HEK293 (cell line): ENCODE measurements at regions of chr11 and their contacts with region 1.

Region 1: DNA sequence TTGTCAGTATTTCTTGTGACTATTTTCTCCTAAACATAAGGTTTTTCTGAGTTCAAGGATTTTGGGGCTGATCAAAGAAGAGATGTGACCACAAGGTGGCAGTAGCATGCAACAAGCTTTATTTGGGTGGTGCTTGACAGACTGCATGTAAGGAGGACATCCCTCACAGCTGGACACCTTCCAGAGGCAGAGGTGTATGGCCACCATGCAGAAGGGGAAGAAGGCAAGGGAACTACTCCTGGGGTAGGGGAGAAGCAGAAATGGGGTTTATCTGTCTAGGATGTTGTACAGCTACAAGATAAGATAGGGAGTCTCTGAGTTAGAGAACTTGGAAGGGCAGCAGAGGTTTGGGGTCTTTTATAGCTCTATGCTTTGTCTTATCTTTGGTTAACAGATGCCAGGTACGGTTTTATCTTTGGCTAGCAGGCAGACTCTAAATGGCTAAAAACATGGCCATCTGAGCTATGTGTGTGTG is 5.1 kb upstream of the BIRC2 start:
- H3K4me3 ChIP-seq: no peak overlapping the region
- H3K27ac ChIP-seq: no peak overlapping the region
- H3K4me1 ChIP-seq: no peaks in the 10 kb centered on the region
- CTCF ChIP-seq: 0 out of 2 replicates have a peak, but pooled peaks have one; percentile 27

Region 2: GRCh38 chr11:102047305-102047924 is 294.5 kb before region 1 on chr11 and contains the start of gene CFAP300:
- CTCF ChIA-PET with region 1: no interaction called
- POLR2A ChIA-PET with region 1: no interaction called
- H3K4me3 ChIP-seq: peak within 1 kb of the TSS; percentile 51
- H3K27ac ChIP-seq: peak within 1 kb of the TSS; percentile 24; the same call in 1 of the 2 replicates
- H3K4me1 ChIP-seq: no peaks in the 10 kb centered on the region
- CTCF ChIP-seq: no peak

Region 3: DNA sequence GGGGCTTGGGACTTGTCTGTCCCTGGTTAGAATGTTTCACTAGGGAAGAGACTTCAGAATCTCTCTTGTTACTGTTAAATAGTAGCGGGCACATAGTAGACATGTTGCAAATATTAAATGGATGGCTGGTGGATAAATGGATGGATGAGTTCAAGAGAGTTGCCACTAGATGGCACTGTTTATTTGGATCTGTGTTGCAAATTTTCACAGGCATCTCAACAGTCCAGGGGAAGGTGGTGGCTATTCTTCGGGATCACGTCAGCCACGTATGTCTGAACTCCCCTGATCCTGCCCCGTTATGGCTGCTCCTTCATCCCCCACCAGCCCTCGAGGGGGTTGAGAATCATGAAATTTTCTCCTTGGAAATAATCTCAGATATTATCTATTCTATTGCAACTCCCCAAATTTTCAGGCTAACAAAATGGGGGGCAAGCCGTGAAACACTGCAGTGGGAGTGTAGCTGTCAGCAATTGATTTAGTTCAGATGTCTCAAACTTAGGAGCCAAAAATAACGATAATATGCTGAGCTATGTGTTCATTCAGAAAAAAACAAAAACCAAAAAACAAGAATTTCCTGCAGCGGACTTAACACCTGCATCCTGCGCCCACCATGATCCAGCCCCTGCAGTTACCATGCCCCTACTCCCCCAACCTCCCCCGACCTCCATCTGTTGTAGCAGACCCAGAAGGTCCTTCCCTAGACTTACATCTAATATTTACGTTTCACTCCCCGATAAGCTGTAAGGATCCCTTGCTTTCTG is 53.7 kb before region 1 on chr11:
- CTCF ChIA-PET with region 1: interaction called, 24 read pairs
- POLR2A ChIA-PET with region 1: no interaction called
- H3K4me3 ChIP-seq: no peak overlapping the region
- H3K27ac ChIP-seq: no peak overlapping the region
- H3K4me1 ChIP-seq: no peaks in the 10 kb centered on the region
- CTCF ChIP-seq: peak; percentile 42; the same call in 1 of the 2 replicates

Region 4: DNA sequence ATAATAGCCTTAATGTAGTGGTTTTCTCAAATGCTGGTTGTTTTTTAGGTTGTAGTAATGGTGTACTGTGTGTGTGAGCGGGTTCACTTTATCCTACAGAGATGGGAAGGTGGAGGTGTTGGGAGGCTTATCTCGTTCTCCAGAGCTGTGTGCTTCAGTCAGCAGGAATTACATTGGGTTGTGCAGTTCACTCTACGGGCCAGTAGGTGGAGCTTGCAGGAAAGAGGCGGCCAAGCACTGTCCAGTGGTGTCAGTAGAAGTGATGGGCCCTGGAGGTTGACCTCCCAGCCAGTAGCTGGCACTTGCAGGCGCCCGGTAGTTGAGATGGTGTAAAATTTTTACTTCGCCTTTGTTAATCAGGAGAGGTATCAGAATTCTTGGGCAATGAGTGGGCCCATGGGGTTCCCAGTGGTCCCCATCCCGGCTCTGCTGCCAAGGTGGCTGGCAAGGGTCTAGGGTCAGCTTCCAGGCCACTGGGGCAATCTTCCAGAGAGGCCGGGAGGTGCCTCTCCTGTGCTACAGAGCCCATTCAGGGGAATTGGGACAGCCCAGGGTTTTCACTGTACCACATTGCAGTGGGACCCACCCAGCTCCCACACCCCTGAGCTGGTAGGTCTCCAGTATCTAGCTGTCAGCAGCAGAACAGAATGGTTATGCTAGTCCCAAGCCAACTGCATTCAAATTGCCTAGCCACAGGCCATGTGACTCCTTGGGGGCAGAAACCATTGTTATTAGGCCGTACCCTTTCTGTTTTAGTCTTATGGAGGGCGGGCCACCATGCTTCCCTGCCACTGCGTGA is 49.0 kb after region 1 on chr11:
- CTCF ChIA-PET with region 1: interaction called, 13 read pairs
- POLR2A ChIA-PET with region 1: interaction called, 3 read pairs
- H3K4me3 ChIP-seq: no peak overlapping the region
- H3K27ac ChIP-seq: no peak overlapping the region
- H3K4me1 ChIP-seq: no peaks in the 10 kb centered on the region
- CTCF ChIP-seq: peak; percentile 50

Region 5: GRCh38 chr11:102510439-102511135 is 168.7 kb after region 1 on chr11:
- CTCF ChIA-PET with region 1: interaction called, 11 read pairs
- POLR2A ChIA-PET with region 1: no interaction called
- H3K4me3 ChIP-seq: no peak overlapping the region
- H3K27ac ChIP-seq: no peak overlapping the region
- H3K4me1 ChIP-seq: 0 out of 2 replicates have a peak, but pooled peaks cover 2% of the 10 kb centered on the region
- CTCF ChIP-seq: no peak

Region 6: DNA sequence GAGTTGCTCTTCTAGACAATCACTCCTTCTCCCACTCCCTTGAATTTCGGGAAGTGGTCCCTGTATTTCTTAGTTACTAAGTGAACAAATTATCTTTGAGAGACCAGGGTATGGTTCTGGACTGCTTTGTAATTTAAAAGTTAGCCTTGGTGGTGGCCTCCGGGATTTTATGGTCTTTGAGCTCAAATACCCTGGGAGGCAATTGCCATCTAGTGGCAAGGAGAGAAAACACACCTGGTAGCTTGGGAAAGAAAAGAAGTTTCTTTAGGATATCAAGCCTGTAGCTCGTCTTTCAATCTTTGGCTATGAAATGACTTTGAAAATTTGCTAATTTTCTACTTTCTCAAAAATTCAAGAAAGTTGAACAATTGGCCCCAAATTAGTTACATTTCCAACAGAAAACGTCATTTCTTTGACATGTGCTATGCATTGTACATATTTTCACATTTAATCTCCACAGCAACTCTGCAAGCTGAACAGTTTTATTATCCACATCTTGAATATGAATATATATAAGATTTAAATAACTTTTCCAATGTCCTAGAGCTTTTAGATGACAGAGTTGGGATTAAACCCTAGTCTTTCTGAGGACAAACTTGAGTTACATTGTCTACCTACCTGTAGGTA is 324.6 kb after region 1 on chr11:
- CTCF ChIA-PET with region 1: interaction called, 31 read pairs
- POLR2A ChIA-PET with region 1: no interaction called
- H3K4me3 ChIP-seq: no peak overlapping the region
- H3K27ac ChIP-seq: no peak overlapping the region
- H3K4me1 ChIP-seq: no peaks in the 10 kb centered on the region
- CTCF ChIP-seq: peak; percentile 30; the same call in 1 of the 2 replicates